ENCODE measurements at regions of chr1 and their contacts with region 1.

Region 1: DNA sequence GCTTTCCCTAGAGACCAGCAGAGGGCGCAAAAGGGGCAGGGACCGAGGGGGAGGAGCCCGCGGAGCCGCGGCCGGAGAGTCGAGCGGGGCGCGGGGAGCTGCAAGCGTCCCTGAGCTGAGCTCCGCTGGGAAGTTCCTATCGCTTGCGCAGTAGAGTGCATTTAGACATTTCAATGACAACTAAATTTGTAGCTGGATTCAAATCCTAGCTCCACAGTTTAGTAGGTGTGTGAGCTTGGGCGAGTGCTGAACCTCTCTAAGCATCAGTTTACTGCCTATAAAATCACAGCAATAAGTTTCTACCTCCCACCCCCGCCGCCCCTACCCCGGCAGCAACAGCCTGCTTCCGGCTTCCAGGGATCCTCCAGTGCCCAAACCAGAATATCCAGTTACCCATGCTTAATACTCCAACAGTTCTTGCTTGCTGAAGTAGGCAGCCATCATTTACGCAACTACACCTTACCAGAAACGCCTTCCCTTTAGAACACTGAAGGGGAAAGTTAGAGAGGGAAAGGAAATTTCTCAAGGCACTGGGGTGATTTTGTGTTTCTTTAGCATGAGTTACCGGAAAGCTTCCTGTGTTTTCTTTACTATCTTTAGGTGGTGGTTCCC is 9.1 kb downstream of the TLR5 start:
- DNase-seq: peak; percentile 66 to 91 (median 72)
- ATAC-seq: peak; percentile 90
- H3K4me3 ChIP-seq: peak overlapping the region; percentile 42
- H3K4me3 Mint-ChIP-seq: peak overlapping the region; percentile 84
- H3K27ac ChIP-seq: no peak overlapping the region
- H3K27ac Mint-ChIP-seq: no peak overlapping the region
- H3K4me1 ChIP-seq: peaks cover 19% of the 10 kb centered on the region
- H3K4me1 Mint-ChIP-seq: peaks cover 31% of the 10 kb centered on the region
- H3K27me3 ChIP-seq: peaks cover 5 to 7% of the 10 kb centered on the region in 2 experiments
- H3K27me3 Mint-ChIP-seq: no peaks in the 10 kb centered on the region
- CTCF ChIP-seq: peak; percentile 95

Region 2: DNA sequence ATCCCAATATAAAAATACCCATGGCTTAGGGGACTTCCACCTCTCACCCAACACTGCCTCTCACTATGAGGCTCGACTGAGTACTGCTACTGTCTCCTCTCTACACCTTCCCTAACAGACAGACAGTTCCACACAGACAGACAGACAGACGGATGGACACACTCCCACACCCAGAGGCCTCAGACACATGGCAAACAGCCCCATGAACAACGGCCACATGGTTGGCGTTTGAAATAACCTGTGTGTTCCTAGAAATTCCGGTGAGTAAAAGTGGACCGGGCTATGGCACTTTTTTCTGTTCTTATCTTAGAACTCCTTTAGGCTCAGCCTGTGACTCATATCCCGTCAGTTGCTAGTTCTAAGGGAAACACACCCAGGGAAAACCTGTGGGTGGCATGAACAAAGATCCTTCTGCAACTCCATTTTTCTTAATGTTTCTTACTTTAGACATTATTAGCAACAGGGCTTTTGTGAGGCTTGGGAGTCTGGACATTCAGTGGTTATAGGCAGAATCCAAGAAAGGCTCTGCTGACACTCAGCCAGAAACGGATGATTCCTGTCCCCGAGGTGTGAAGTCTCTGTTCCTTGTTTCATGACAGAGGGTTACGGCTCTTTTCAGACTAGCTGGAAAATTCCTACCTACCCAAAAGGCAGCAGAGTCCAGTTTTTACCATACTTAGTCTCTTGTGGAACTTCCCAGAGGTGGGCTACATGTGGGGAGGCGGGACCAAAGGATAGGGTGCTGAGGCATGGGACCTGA is 99.7 kb after region 1 on chr1:
- CTCF ChIA-PET with region 1: no interaction called
- POLR2A ChIA-PET with region 1: no interaction called
- intact Hi-C with region 1: loop called in 1 of 2 experiments (anchors 5 kb)
- DNase-seq: peak in 2 of 14 experiments; percentile 47 to 48
- ATAC-seq: peak; percentile 41
- H3K4me3 ChIP-seq: no peak overlapping the region
- H3K4me3 Mint-ChIP-seq: peak overlapping the region; percentile 1
- H3K27ac ChIP-seq: peak overlapping the region in 1 of 2 donors; percentile 86
- H3K27ac Mint-ChIP-seq: peak overlapping the region; percentile 95
- H3K4me1 ChIP-seq: peaks cover 62% of the 10 kb centered on the region
- H3K4me1 Mint-ChIP-seq: peaks cover 74% of the 10 kb centered on the region
- H3K27me3 ChIP-seq: no peaks in the 10 kb centered on the region
- H3K27me3 Mint-ChIP-seq: no peaks in the 10 kb centered on the region
- CTCF ChIP-seq: no peak

Region 3: DNA sequence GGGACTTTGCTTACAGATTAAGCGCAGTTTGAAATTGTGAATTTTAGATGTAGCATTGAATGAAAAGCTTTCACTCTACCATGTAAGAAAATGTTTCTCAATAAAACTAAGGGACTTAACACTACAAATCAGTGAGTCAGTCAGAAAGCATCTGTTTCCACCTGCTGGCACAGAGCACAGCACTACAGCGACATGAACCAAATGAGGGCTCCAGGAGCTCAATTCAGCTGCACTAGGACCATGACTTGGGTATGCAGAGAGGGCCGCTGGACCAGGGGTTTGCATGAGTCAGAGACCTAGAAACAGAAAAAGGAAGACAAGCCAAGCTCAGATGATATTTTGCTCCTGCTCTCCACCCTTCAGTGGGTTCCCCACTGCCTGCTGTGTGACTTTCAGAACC is 224.9 kb after region 1 on chr1:
- CTCF ChIA-PET with region 1: interaction called, 6 read pairs
- POLR2A ChIA-PET with region 1: interaction called, 14 read pairs
- intact Hi-C with region 1: loop called (anchors 2 kb)
- DNase-seq: peak in 3 of 14 experiments; percentile 10 to 32 (median 22)
- ATAC-seq: no peak
- H3K4me3 ChIP-seq: no peak overlapping the region
- H3K4me3 Mint-ChIP-seq: no peak overlapping the region
- H3K27ac ChIP-seq: no peak overlapping the region
- H3K27ac Mint-ChIP-seq: no peak overlapping the region
- H3K4me1 ChIP-seq: peaks cover 15% of the 10 kb centered on the region
- H3K4me1 Mint-ChIP-seq: peaks cover 36% of the 10 kb centered on the region
- H3K27me3 ChIP-seq: peaks cover 0 to 4% of the 10 kb centered on the region in 2 experiments
- H3K27me3 Mint-ChIP-seq: no peaks in the 10 kb centered on the region
- CTCF ChIP-seq: no peak

Region 4: GRCh38 chr1:223628233-223629125 is 494.5 kb after region 1 on chr1:
- CTCF ChIA-PET with region 1: interaction called, 3 read pairs
- POLR2A ChIA-PET with region 1: no interaction called
- intact Hi-C with region 1: loop called in 1 of 2 experiments (anchors 2 kb)
- DNase-seq: peak in 12 of 14 experiments; percentile 10 to 68 (median 28)
- ATAC-seq: no peak
- H3K4me3 ChIP-seq: no peak overlapping the region
- H3K4me3 Mint-ChIP-seq: no peak overlapping the region
- H3K27ac ChIP-seq: no peak overlapping the region
- H3K27ac Mint-ChIP-seq: no peak overlapping the region
- H3K4me1 ChIP-seq: peaks cover 5% of the 10 kb centered on the region
- H3K4me1 Mint-ChIP-seq: no peaks in the 10 kb centered on the region
- H3K27me3 ChIP-seq: no peaks in the 10 kb centered on the region
- H3K27me3 Mint-ChIP-seq: no peaks in the 10 kb centered on the region
- CTCF ChIP-seq: peak; percentile 62

Region 5: DNA sequence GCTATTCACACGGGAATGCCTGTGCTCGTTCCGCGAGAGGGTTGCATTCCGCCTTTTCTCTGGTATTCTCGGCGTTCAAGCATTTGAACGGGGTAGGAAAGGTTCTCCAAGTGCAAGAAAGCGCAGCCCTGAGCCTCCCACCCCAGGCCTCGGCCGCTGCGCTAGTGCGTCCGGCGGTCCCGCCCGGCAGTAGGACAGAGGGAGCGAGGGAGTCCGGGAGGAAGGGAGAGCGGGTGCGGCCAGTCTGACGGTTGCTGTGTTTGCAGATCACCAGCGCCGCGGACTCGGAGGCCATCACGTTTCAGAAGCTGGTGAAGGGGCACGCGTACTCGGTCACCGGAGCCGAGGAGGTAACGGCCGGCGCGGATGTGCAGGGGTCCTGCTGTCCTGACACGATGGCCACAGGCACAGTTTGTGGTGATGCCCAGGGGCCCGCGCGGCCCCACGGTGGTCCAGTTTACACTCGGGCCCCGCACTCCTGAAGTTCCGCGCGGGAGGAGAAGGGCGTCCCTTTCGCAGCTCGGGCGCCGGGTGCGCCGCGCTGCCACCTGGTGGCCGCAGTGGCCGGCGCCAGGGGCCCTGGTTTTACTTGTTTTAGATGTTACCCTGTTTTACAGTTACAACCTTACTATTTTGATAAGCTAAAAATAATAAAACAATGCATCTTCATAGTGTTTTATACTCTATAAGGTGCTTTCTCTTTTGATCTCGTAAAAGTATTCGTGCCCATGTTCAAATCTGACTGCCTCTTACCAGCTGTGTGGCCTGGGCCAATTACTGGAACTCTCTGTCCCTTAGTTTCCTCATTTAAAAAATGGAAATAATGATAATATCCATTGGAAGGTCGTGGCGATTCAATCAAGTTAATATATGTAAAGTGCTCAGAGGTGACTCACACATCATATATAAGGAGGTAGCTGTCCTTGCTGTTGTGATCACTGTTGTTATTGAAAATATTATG is 615.1 kb after region 1 on chr1:
- CTCF ChIA-PET with region 1: no interaction called
- POLR2A ChIA-PET with region 1: no interaction called
- intact Hi-C with region 1: loop called in 1 of 2 experiments (anchors 10 kb)
- DNase-seq: peak; percentile 19 to 85 (median 61)
- ATAC-seq: peak; percentile 86
- H3K4me3 ChIP-seq: peak overlapping the region; percentile 63
- H3K4me3 Mint-ChIP-seq: peak overlapping the region; percentile 82
- H3K27ac ChIP-seq: no peak overlapping the region
- H3K27ac Mint-ChIP-seq: no peak overlapping the region
- H3K4me1 ChIP-seq: peaks cover 18% of the 10 kb centered on the region
- H3K4me1 Mint-ChIP-seq: peaks cover 7% of the 10 kb centered on the region
- H3K27me3 ChIP-seq: no peaks in the 10 kb centered on the region
- H3K27me3 Mint-ChIP-seq: no peaks in the 10 kb centered on the region
- CTCF ChIP-seq: peak; percentile 99